Right lobe of liver (tissue), 6 donors: ENCODE measurements at regions of chr10 and their contacts with region 1.

Region 1: GRCh38 chr10:102352066-102352715 is 43.3 kb upstream of the NFKB2 start:
- DNase-seq: peak in 2 of 3 donors; percentile 47 to 53
- ATAC-seq: peak; percentile 69 to 77 (median 74)
- H3K4me3 ChIP-seq: no peak overlapping the region
- H3K27ac ChIP-seq: no peak overlapping the region
- H3K4me1 ChIP-seq: no peaks in the 10 kb centered on the region
- H3K27me3 ChIP-seq: no peaks in the 10 kb centered on the region
- CTCF ChIP-seq: peak; percentile 80 to 91 (median 88)
- POLR2A ChIP-seq: no peak

Region 2: GRCh38 chr10:102220612-102221011 is 131.6 kb before region 1 on chr10:
- intact Hi-C with region 1: no loop called
- DNase-seq: no peak
- ATAC-seq: no peak
- H3K4me3 ChIP-seq: no peak overlapping the region
- H3K27ac ChIP-seq: no peak overlapping the region
- H3K4me1 ChIP-seq: no peaks in the 10 kb centered on the region
- H3K27me3 ChIP-seq: no peaks in the 10 kb centered on the region
- CTCF ChIP-seq: no peak
- POLR2A ChIP-seq: no peak

Region 3: GRCh38 chr10:102235598-102235920 is 116.6 kb before region 1 on chr10:
- intact Hi-C with region 1: loop called (anchors 5 kb)
- DNase-seq: no peak
- ATAC-seq: no peak
- H3K4me3 ChIP-seq: no peak overlapping the region
- H3K27ac ChIP-seq: no peak overlapping the region
- H3K4me1 ChIP-seq: peaks cover 0 to 15% (median 7%) of the 10 kb centered on the region in 4 donors
- H3K27me3 ChIP-seq: no peaks in the 10 kb centered on the region
- CTCF ChIP-seq: no peak
- POLR2A ChIP-seq: no peak